ENCODE measurements at regions of chr20 and their contacts with region 1.

Region 1: GRCh38 chr20:8131598-8132483 is at the start of gene PLCB1:
- DNase-seq: peak; percentile 83 to 95 (median 90)
- ATAC-seq: peak; percentile 89 to 95 (median 93)
- H3K4me3 ChIP-seq: peak within 1 kb of the TSS; percentile 75 to 93 (median 89)
- H3K27ac ChIP-seq: peak within 1 kb of the TSS; percentile 54 to 88 (median 72)
- H3K4me1 ChIP-seq: no peaks in the 10 kb centered on the region
- H3K27me3 ChIP-seq: no peaks in the 10 kb centered on the region
- CTCF ChIP-seq: peak; percentile 57 to 79 (median 72)
- total RNA-seq, gene PLCB1: 12.8 to 18.7 (median 14.6) TPM

Region 2: DNA sequence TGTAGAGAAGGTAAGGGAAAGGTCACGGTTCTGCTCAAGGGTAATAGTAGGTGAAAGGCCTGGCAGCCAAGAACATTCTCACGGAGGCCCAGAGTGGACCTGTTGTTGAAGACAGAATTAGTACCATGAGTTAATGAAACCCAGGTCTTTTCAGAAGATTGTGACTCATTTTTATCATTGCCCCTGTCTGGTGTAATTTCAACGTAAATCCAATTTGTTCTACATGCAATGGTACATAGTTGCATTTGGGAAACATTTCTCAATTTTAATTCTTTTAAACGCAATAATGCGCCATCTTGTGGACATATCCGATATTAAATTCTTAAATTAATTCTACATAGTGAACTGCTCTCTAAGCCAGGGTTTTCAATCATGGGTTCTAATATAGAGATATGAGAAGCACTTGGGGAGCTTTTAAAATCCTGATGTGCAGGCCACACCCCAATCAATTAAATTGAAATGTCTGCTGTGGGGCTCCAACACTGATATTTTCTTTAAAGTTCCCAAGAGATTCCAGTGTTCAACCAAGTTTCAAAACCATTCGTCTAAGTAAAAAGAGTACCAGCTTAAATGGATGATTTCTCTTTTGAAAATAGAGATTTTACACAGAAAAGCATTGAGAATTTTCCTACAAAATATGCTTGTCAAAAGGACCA is 257.7 kb after region 1 on chr20:
- intact Hi-C with region 1: loop called in 2 of 3 experiments (anchors 5 to 10 kb)
- DNase-seq: no peak
- ATAC-seq: peak; percentile 47 to 72 (median 65)
- H3K4me3 ChIP-seq: no peak overlapping the region
- H3K27ac ChIP-seq: peak overlapping the region in 1 of 4 donors; percentile 15
- H3K4me1 ChIP-seq: peaks cover 11 to 40% (median 40%) of the 10 kb centered on the region in 3 donors
- H3K27me3 ChIP-seq: no peaks in the 10 kb centered on the region
- CTCF ChIP-seq: peak in 3 of 4 donors; percentile 24 to 36 (median 33)

Region 3: DNA sequence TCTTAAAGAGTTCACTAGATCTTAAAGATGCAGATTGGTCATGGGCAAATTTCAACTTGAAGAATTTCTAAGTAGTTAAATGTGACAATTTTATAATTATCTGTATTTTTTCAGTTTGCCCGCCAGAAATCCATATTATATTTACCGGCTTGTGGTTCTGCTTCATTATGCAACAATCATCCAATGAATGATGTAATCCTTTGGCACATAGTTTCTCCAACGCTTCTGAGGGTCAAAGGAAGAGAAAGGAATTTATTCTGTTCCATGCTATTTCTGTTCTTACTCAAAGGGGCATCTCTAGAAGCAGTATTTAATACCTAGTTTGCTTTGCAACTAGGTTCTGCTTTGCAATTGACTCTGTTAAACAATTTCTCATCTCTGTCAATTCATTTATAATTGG is 577.8 kb after region 1 on chr20:
- intact Hi-C with region 1: loop called in 1 of 3 experiments (anchors 10 kb)
- DNase-seq: no peak
- ATAC-seq: no peak
- H3K4me3 ChIP-seq: no peak overlapping the region
- H3K27ac ChIP-seq: no peak overlapping the region
- H3K4me1 ChIP-seq: no peaks in the 10 kb centered on the region
- H3K27me3 ChIP-seq: no peaks in the 10 kb centered on the region
- CTCF ChIP-seq: no peak

Region 4: DNA sequence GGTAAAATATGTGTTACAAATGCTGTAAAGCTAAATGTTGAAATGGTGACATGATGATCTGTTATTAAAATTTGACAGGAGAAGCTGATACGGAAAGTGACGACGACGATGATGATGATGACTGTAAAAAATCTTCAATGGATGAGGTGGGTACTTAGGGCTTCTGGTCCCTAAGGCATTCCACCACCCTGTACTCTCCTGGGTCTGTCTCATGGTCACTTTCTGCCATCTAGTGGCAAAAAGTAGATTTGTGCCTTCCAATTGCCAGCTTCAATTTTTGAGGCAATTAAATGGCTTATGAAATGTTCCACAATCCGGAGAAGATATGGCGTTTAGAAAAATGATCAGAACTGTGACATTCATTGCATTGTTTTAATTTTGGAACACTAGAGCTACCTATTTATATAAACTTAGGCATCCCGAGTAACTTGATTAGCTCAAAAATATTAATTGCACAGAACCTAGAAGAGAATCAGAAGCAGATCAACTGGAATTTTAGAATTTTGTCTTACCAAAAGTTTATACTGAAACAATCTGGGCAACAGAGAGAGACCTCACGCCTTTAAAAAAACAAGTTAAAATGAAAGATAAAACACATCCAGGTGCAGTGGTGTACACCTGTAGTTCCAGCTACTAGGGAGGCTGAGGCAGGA is 590.6 kb after region 1 on chr20:
- intact Hi-C with region 1: loop called in 1 of 3 experiments (anchors 5 kb)
- DNase-seq: peak in 3 of 6 donors; percentile 15 to 54 (median 19)
- ATAC-seq: peak; percentile 82 to 92 (median 91)
- H3K4me3 ChIP-seq: no peak overlapping the region
- H3K27ac ChIP-seq: no peak overlapping the region
- H3K4me1 ChIP-seq: no peaks in the 10 kb centered on the region
- H3K27me3 ChIP-seq: no peaks in the 10 kb centered on the region
- CTCF ChIP-seq: peak in 3 of 4 donors; percentile 51 to 71 (median 62)